Astrocyte of the cerebellum (primary cell): ENCODE measurements at regions of chr6 and their contacts with region 1.

Region 1: DNA sequence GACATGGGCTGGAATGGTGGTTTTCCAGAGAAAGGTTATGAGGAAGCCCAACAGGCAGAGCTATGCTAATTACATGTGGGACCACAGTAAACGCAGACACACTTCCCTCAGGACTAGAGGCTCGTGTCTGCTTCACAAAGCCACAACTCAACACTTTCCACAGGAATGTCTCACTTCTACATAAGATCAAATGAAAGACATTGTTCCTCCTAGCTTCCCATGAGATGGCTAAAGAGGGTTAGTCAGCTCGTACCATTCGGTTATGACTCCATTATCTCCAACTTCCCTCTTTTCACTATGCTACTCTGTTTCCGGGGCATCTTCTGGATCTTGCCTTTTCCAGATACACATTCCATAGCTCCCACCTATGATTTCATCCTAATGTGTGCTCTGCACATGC is 29.1 kb upstream of the ZC3H12D start:
- DNase-seq: no peak
- H3K4me3 ChIP-seq: no peak overlapping the region
- CTCF ChIP-seq: no peak

Region 2: DNA sequence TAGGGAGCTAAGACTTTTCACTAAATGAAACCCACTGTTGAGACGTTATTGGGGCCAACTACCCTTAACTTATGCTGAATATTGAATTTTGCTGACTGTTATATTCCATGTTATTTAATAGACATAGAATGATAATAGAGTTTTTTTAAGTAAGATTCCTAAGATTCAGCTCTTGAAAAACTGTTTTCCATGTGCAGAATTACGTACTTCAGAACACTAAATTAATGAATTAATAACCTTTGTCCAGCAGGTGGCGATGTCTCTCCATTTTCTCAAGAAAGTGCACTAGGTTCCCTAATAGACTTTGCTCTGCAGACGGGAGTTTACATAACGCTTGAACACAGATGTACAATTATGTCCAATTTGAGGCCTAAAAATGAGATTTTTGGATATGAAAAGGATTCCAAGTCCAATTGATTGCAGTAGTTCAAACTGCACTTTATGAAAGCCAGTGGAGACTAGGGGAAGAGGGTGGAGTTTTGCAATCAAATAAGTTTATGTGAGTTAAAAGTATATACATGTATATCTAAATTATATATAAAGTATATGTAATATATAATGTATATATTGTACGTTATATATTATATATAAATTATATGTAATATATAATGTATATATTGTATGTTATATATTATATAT is 485.0 kb before region 1 on chr6:
- in situ Hi-C with region 1: loop called (anchors 25 kb)
- DNase-seq: peak; percentile 96
- H3K4me3 ChIP-seq: no peak overlapping the region
- CTCF ChIP-seq: peak; percentile 51

Region 3: DNA sequence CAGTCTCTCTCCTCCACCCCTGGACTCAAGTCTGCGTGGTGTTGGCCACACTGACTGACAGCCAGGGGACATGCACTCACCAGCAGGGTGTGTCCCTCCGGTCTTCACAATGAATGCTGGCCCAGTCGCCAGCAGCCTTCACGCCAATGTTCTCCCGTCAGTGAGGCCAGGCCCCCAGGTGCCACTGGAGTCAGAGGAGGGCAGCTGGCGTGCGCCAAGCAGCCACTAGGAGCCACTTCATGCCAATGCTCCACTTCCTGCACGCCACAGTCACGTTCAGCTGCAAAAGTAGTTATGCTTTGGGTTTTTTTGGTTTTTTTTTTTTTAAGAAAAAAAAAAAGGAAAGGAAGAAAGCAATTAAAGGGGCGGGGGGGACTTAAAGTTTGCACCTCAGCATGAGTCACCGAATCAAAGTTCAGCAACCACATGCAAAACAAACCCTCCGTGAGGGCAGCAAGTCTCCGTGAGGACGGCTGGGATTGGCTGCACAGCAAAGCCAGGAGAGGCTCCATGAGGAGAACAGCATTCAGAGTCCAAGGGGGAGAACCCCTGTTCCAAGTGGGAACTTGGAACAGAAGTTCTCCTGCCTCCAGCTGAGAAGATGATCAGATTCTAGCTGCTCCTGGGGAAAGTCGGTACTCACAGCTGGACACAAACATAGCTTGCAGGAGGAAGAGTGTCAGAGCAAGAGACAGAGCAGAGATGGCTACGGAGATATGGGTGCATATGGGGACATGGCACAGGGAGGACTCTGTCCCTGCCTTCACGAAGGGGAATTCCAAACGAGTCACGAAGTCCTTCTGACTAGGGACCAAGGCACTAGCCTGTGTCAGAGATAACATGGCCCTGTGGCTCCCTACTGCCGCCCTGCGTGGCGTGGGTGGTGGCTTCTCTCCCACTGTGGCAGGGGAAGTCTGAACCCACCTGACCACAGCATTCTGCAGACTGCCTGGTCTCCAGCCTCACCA is 28.9 kb before region 1 on chr6 and contains the start of gene ZC3H12D:
- in situ Hi-C with region 1: no loop called
- DNase-seq: peak; percentile 36
- H3K4me3 ChIP-seq: no peak within 1 kb of the TSS
- CTCF ChIP-seq: peak; percentile 31

Region 4: DNA sequence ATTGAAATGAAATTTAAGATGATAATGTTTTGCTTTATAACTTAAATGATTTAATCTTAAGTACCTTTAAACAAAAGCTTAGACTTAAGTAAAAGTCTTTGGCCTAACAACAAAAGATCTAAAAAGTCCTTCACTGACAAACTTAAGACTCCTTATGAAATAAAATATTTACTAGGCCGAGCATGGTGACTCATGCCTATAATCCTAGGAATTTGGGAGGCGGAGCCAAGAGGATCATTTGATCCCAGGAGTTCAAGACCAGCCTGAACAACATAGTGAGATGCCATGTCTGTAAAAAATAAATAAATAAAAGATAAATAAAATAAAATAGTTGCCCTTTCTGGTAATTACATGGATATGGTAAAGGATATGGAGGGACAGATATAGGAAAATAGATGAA is 122.2 kb after region 1 on chr6:
- in situ Hi-C with region 1: no loop called
- DNase-seq: no peak
- H3K4me3 ChIP-seq: no peak overlapping the region
- CTCF ChIP-seq: no peak